Activated B cell treated with CpG ODN at 0.5 μM for 24 hours (primary cell): ENCODE measurements at regions of chr5 and their contacts with region 1.

Region 1: DNA sequence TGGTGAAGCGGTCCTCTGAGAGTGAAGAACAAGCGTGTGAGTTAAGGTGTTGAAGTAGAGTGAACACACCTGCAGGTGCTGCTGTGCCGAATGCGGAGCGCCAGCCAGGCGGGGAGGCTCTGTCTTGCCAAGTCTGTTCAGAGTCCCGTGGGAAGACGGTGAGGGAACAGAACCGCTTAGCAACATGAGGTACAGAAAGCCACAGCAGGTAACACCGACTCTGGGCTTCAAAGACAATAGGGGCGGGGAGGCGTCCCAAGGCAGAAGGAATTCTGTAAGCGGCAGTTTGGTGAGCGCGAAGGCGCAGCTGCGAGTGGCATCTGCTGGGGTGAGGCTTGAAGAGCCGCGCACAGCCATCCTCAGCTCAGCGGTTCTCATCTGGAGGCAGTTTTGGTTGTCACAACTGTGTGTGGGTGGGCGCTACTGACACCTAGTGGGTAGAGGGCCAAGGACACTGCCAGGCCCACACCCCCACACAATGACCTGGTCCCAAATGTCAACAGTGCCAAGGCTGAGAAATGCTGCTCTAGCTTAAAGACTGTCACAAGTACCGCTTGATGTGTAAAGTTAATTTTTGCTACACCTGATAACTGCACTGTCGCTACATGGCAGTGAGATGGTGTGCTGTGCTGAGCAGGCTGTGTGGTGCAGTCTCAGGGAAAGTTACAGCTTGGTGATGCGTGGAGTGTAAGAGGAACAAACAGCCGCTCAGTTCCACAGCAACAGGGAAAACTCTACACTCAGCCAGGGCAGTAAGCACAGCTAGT is 67.4 kb upstream of the TBC1D9B start:
- DNase-seq: peak; percentile 58
- ATAC-seq: peak; percentile 84
- H3K4me3 Mint-ChIP-seq: no peak overlapping the region
- H3K27ac Mint-ChIP-seq: peak overlapping the region; percentile 76
- H3K4me1 Mint-ChIP-seq: peaks cover 51% of the 10 kb centered on the region
- H3K27me3 Mint-ChIP-seq: no peaks in the 10 kb centered on the region
- CTCF ChIP-seq: no peak

Region 2: DNA sequence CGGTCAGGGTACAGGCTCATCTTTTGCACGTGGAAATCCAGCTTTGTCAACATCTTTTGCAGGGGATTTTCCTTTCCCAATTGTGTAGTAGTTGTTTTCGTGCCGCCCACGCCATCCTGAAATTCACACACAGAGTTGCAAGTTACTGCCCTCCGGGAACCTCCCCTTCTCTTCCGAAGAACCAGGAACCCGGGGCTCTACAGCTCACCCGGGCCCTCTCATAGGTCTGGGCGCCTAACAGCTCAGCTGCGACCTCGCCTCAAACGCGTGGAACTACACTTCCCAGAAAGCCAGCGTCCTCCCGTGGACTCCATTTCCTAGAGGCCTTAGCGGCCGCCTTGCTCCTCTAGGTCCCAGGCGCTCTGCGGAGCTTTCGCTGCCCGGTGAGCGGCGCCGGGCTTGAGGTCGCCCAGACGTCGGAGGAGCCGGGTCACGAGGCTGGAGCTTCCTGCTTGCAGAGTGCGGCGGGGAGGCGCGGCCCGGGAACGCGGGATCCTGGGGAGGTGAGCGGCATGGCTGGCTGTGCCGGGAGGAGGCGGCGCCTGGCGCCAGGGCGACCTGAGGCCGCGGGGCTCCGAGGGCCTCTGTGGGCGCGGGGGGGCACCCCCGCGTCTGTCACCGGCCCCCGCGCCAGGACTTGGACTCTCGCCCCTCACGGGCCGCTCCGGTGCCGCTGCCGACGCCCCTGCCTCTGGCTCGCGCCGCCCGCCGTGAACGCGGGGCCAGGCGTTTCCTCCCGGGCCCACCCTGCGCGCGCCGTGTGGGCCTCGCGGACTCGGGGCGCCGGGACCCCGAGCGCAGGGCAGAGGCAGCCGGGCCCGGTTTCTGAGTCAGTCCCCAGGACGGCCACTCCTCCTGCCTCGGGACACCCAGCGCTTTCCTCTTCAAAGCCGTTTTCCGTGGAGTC is 1115.3 kb before region 1 on chr5 and contains the start of gene ZNF354B:
- CTCF ChIA-PET with region 1: no interaction called
- POLR2A ChIA-PET with region 1: no interaction called
- intact Hi-C with region 1: no loop called
- DNase-seq: peak; percentile 73
- ATAC-seq: peak; percentile 99
- H3K4me3 Mint-ChIP-seq: peak within 1 kb of the TSS; percentile 89
- H3K27ac Mint-ChIP-seq: peak within 1 kb of the TSS; percentile 82
- H3K4me1 Mint-ChIP-seq: peaks cover 19% of the 10 kb centered on the region
- H3K27me3 Mint-ChIP-seq: no peaks in the 10 kb centered on the region
- CTCF ChIP-seq: no peak
- total RNA-seq, gene ZNF354B: 17.5 and 20.0 TPM in 2 replicates

Region 3: GRCh38 chr5:178996156-178996555 is 979.0 kb before region 1 on chr5:
- CTCF ChIA-PET with region 1: no interaction called
- POLR2A ChIA-PET with region 1: no interaction called
- intact Hi-C with region 1: no loop called
- DNase-seq: no peak
- ATAC-seq: no peak
- H3K4me3 Mint-ChIP-seq: no peak overlapping the region
- H3K27ac Mint-ChIP-seq: no peak overlapping the region
- H3K4me1 Mint-ChIP-seq: no peaks in the 10 kb centered on the region
- H3K27me3 Mint-ChIP-seq: peaks cover 27% of the 10 kb centered on the region
- CTCF ChIP-seq: no peak

Region 4: DNA sequence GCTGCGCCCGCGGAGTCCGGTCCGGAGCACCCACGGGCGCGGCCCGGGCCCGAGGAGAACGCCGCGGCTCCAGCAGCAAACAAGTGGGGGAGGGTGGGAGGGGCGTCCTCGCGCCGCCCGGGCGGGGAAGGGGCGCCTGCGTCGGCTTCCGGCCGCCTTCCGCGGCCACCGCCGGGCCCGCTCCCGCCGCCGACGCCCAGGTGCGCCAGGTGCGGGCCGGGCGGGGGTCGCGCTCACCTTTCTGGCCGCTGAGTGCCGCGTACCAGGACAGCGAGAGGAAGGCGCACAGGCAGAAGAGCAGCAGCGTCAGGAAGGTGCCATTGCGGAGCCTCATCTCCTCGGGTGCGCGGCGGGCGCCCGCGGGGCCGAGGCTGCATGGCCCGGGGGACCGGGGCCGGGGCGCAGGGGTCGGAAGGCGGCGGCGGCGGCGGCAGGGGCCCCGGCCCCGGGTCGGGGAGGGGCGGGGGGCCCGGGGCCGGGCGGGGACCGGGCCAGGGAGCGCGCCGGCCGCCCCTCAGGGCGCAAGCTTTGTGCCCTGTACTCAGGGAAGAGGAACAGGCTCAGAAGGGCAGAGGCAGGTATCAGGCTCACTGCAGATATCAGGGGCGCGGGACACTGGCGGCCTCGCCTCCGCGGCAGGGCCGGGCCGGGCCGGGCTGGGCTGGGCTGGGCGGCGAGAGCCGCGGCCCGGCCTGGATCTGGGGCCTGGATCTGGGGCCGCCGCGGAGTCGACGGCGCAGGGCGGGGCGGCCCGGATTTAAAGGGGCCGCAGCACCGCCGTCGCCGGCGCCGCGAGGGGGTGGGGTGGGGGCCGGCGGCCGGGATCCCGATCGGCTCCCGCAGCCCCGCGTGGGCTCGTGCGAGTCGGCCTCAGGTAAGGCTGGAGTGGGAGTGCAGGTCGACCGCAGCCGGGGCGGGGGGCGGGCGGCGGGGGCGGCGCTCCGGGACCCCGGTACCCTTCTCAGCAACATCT is 168.6 kb before region 1 on chr5 and contains the start of gene MGAT4B:
- CTCF ChIA-PET with region 1: interaction called, 29 read pairs
- POLR2A ChIA-PET with region 1: interaction called, 6 read pairs
- intact Hi-C with region 1: loop called (anchors 1 kb)
- DNase-seq: peak; percentile 69
- ATAC-seq: peak; percentile 79
- H3K4me3 Mint-ChIP-seq: peak within 1 kb of the TSS; percentile 79
- H3K27ac Mint-ChIP-seq: peak within 1 kb of the TSS; percentile 70
- H3K4me1 Mint-ChIP-seq: peaks cover 37% of the 10 kb centered on the region
- H3K27me3 Mint-ChIP-seq: no peaks in the 10 kb centered on the region
- CTCF ChIP-seq: no peak
- total RNA-seq, gene MGAT4B: 73.6 and 85.3 TPM in 2 replicates

Region 5: GRCh38 chr5:179866258-179867078 is 108.7 kb before region 1 on chr5:
- CTCF ChIA-PET with region 1: interaction called, 7 read pairs
- POLR2A ChIA-PET with region 1: no interaction called
- intact Hi-C with region 1: loop called (anchors 1 kb)
- DNase-seq: no peak
- ATAC-seq: peak; percentile 52
- H3K4me3 Mint-ChIP-seq: no peak overlapping the region
- H3K27ac Mint-ChIP-seq: no peak overlapping the region
- H3K4me1 Mint-ChIP-seq: no peaks in the 10 kb centered on the region
- H3K27me3 Mint-ChIP-seq: no peaks in the 10 kb centered on the region
- CTCF ChIP-seq: no peak

Region 6: DNA sequence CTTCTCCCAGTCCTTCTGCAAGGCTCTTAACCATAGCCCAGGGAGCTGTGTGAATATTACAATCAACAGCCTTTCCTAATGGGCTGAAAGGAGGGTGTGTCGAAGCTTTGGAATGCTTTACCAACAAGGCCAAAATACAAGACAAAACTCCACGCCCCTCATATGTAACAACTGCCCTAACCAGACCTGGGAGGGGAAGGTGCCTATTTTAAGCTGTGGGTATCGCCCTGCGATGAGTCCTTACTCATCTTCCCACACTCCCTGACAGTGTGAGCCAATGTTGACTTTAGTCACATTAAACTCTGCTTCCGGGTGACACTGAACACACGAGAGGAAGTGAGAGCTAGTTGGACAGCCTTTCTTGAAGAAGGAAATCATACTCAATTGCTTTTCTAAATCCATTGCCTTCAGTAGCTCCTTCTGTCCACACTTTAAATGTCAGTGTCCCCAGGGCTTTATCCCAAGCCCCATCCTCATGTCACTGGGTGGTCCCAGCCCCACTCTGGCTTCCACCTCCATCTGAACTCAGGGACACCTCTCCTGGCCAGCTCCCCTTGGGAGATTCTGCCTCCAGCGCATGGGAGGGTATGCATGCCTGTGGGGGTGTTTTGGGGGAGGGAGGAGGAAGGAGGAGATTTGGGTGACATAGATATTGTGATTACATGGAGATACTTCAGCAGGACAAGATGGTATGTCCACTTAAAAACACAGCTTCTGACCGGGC is 60.9 kb before region 1 on chr5:
- CTCF ChIA-PET with region 1: interaction called, 11 read pairs
- POLR2A ChIA-PET with region 1: interaction called, 6 read pairs
- intact Hi-C with region 1: loop called (anchors 1 kb)
- DNase-seq: no peak
- ATAC-seq: peak; percentile 35
- H3K4me3 Mint-ChIP-seq: no peak overlapping the region
- H3K27ac Mint-ChIP-seq: no peak overlapping the region
- H3K4me1 Mint-ChIP-seq: peaks cover 17% of the 10 kb centered on the region
- H3K27me3 Mint-ChIP-seq: no peaks in the 10 kb centered on the region
- CTCF ChIP-seq: no peak

Region 7: GRCh38 chr5:180090098-180090768 is 115.1 kb after region 1 on chr5:
- CTCF ChIA-PET with region 1: no interaction called
- POLR2A ChIA-PET with region 1: interaction called, 3 read pairs
- intact Hi-C with region 1: loop called (anchors 2 kb)
- DNase-seq: peak; percentile 85
- ATAC-seq: peak; percentile 91
- H3K4me3 Mint-ChIP-seq: peak overlapping the region; percentile 86
- H3K27ac Mint-ChIP-seq: peak overlapping the region; percentile 56
- H3K4me1 Mint-ChIP-seq: peaks cover 15% of the 10 kb centered on the region
- H3K27me3 Mint-ChIP-seq: peaks cover 8% of the 10 kb centered on the region
- CTCF ChIP-seq: no peak